ENCODE measurements at regions of chr10 and their contacts with region 1.

Region 1: GRCh38 chr10:30751678-30752331 is 122.3 kb upstream of the LYZL2 start:
- DNase-seq: peak; percentile 82
- ATAC-seq: peak; percentile 92
- H3K4me3 ChIP-seq: no peak overlapping the region
- H3K27ac ChIP-seq: peak overlapping the region; percentile 30
- H3K4me1 ChIP-seq: no peaks in the 10 kb centered on the region
- H3K27me3 ChIP-seq: no peaks in the 10 kb centered on the region
- CTCF ChIP-seq: peak; percentile 96

Region 2: DNA sequence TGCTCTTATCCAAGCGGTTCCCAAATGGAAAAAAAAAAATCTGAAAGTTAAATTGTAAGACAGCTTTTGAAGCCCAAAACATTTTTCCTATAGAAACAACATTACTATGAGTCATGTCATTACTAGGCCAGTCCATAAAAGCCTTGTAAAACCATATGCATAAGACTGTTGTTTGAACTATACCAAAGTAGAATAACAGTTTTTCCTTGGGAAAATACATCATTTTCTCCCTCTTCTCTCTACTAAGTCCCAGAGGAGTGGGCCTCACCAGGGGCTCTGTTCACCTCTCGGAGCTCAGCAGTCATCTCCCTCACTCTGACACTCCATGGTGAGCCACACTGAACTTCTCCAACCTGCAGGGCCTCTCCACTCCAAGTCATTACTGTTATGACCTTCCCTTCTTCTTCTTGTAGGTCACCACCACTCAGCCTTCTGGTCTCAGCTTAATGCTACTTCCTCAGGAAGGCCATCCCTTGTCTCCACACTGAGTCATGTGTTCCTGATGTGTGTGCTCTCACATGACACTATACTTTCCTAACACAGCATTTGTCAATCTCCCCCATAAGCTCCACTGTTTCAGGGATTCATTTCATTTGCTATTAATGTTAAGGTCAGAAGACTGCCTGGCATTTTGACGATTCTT is 247.4 kb after region 1 on chr10:
- intact Hi-C with region 1: no loop called
- DNase-seq: no peak
- ATAC-seq: peak; percentile 94
- H3K4me3 ChIP-seq: peak overlapping the region; percentile 34
- H3K27ac ChIP-seq: peak overlapping the region; percentile 67
- H3K4me1 ChIP-seq: peaks cover 10% of the 10 kb centered on the region
- H3K27me3 ChIP-seq: no peaks in the 10 kb centered on the region
- CTCF ChIP-seq: no peak

Region 3: DNA sequence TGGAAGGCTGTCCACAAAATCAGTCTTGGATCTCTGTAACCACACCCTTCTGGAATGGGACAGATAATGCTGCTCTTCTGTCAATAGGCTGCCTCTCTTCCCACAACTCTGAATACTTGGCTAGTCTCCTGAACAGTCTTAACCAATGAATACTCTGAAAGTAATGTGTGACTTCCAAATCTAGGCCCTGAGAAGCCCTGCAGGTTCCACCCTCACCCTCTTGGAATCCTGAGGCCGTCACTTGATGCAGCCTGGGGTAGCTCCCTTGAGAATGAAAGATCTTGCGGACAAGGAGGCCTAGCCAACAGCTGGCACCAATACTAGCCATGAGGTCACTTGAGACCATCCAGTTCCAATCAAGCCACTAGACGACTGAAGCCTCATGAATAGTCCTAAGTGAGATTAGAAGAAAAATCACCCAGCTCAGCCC is 1067.6 kb after region 1 on chr10:
- intact Hi-C with region 1: loop called (anchors 10 kb)
- DNase-seq: no peak
- ATAC-seq: no peak
- H3K4me3 ChIP-seq: no peak overlapping the region
- H3K27ac ChIP-seq: no peak overlapping the region
- H3K4me1 ChIP-seq: no peaks in the 10 kb centered on the region
- H3K27me3 ChIP-seq: no peaks in the 10 kb centered on the region
- CTCF ChIP-seq: no peak

Measured in upper lobe of right lung (tissue), 1 donor.